ENCODE measurements at regions of chr16 and their contacts with region 1.

Region 1: DNA sequence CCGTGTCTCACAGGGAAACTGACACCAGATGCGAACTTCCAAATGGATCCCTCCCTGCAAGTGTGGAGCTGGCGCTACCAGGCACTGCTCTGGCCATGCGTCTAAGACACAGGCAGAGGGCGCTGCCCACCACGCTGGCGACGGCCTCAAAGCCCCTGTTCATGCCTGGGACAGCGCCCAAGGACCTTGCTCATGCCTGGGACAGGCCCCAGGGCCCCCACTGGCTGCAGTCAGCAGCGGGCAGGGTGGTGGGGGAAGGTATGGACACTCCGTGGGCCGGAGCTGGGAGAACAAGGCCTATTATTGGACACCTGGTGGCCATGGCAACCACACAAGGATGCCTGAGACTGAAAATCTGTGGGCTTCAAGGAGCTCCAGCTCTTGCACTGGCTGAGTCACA is 8.8 kb downstream of the ZG16B start:
- DNase-seq: peak; percentile 33 to 57 (median 48)
- ATAC-seq: peak; percentile 79
- H3K4me3 ChIP-seq: no peak overlapping the region
- H3K4me3 Mint-ChIP-seq: peak overlapping the region in 1 of 10 donors; percentile 14
- H3K27ac ChIP-seq: no peak overlapping the region
- H3K27ac Mint-ChIP-seq: peak overlapping the region in 7 of 9 donors; percentile 18 to 66 (median 47)
- H3K4me1 ChIP-seq: peaks cover 30 to 33% of the 10 kb centered on the region in 2 donors
- H3K4me1 Mint-ChIP-seq: peaks cover 13 to 45% (median 24%) of the 10 kb centered on the region in 7 donors
- H3K27me3 ChIP-seq: no peaks in the 10 kb centered on the region
- H3K27me3 Mint-ChIP-seq: peaks cover 0 to 6% (median 0%) of the 10 kb centered on the region in 5 donors

Region 2: DNA sequence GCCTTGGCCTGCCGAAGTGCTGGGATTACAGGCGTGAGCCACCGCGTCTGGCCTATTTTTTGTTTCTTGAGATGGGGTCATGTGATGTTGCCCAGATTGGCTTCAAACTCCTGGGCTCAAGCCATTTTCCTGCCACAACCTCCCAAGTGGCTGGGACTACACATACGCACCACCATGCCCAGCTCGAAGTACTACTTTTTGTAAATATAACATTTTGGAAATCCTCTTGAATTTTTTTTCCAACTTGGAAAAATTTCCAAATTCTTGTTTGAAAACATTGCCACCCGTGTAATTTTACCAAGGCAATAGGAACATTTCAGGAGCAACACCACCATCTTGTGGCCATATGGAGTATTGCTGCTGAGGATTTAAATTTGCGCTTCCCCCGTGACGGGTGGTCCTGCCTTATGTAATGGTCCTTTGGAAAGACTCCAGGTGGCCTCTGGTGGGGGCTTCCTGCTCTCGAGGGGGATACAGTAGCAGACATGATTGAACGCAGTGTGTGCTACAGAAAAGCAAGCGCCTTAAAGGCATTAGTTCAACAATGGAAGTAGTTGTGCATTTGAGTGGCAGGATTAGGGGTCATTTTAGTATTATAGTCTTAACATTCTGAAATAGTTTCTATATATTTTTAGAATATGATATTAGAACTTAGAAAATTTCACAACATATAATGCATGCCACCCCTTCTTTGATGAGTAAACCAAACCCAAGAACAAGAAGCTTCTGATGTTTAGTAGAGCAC is 80.8 kb after region 1 on chr16:
- CTCF ChIA-PET with region 1: interaction called, 3 read pairs
- POLR2A ChIA-PET with region 1: no interaction called
- intact Hi-C with region 1: loop called in 1 of 2 experiments (anchors 1 kb)
- DNase-seq: peak in 8 of 9 donors; percentile 40 to 74 (median 56)
- ATAC-seq: peak; percentile 88
- H3K4me3 ChIP-seq: no peak overlapping the region
- H3K4me3 Mint-ChIP-seq: peak overlapping the region in 1 of 10 donors; percentile 24
- H3K27ac ChIP-seq: no peak overlapping the region
- H3K27ac Mint-ChIP-seq: peak overlapping the region in 5 of 9 donors; percentile 53 to 76 (median 69)
- H3K4me1 ChIP-seq: no peaks in the 10 kb centered on the region
- H3K4me1 Mint-ChIP-seq: peaks cover 5 to 11% (median 6%) of the 10 kb centered on the region in 7 donors
- H3K27me3 ChIP-seq: no peaks in the 10 kb centered on the region
- H3K27me3 Mint-ChIP-seq: no peaks in the 10 kb centered on the region

Region 3: GRCh38 chr16:2968738-2969544 is 130.0 kb after region 1 on chr16 and contains the start of gene PAQR4:
- CTCF ChIA-PET with region 1: no interaction called
- POLR2A ChIA-PET with region 1: no interaction called
- intact Hi-C with region 1: no loop called
- DNase-seq: peak; percentile 49 to 91 (median 71)
- ATAC-seq: peak; percentile 88
- H3K4me3 ChIP-seq: peak within 1 kb of the TSS; percentile 64
- H3K4me3 Mint-ChIP-seq: peak within 1 kb of the TSS; percentile 59 to 80 (median 75)
- H3K27ac ChIP-seq: no peak within 1 kb of the TSS
- H3K27ac Mint-ChIP-seq: peak within 1 kb of the TSS in 2 of 9 donors; percentile 16 to 70
- H3K4me1 ChIP-seq: peaks cover 19 to 28% of the 10 kb centered on the region in 2 donors
- H3K4me1 Mint-ChIP-seq: peaks cover 10 to 32% (median 24%) of the 10 kb centered on the region in 7 donors
- H3K27me3 ChIP-seq: peaks cover 0 to 28% of the 10 kb centered on the region in 2 donors
- H3K27me3 Mint-ChIP-seq: peaks cover 10 to 26% (median 16%) of the 10 kb centered on the region in 5 donors
- total RNA-seq, gene PAQR4: 0.40 to 39.4 (median 0.79) TPM

Measured in naive thymus-derived CD4-positive, alpha-beta T cell (primary cell).